ENCODE measurements at regions of chr11 and their contacts with region 1.

Region 1: GRCh38 chr11:61446211-61446651 is 16.3 kb downstream of the SDHAF2 start:
- DNase-seq: peak; percentile 83 to 95
- H3K4me3 ChIP-seq: no peak overlapping the region
- CTCF ChIP-seq: no peak
- POLR2A ChIP-seq: no peak

Region 2: GRCh38 chr11:60018058-60018457 is 1428.2 kb before region 1 on chr11:
- intact Hi-C with region 1: no loop called
- DNase-seq: no peak
- H3K4me3 ChIP-seq: no peak overlapping the region
- CTCF ChIP-seq: no peak
- POLR2A ChIP-seq: no peak

Region 3: GRCh38 chr11:61472868-61473267 is 26.6 kb after region 1 on chr11:
- intact Hi-C with region 1: no loop called
- DNase-seq: peak in 1 of 2 donors; percentile 31
- H3K4me3 ChIP-seq: no peak overlapping the region
- CTCF ChIP-seq: no peak
- POLR2A ChIP-seq: no peak

Region 4: GRCh38 chr11:61509043-61510029 is 63.1 kb after region 1 on chr11:
- intact Hi-C with region 1: loop called (anchors 10 kb)
- DNase-seq: no peak
- H3K4me3 ChIP-seq: no peak overlapping the region
- CTCF ChIP-seq: no peak
- POLR2A ChIP-seq: no peak

Region 5: DNA sequence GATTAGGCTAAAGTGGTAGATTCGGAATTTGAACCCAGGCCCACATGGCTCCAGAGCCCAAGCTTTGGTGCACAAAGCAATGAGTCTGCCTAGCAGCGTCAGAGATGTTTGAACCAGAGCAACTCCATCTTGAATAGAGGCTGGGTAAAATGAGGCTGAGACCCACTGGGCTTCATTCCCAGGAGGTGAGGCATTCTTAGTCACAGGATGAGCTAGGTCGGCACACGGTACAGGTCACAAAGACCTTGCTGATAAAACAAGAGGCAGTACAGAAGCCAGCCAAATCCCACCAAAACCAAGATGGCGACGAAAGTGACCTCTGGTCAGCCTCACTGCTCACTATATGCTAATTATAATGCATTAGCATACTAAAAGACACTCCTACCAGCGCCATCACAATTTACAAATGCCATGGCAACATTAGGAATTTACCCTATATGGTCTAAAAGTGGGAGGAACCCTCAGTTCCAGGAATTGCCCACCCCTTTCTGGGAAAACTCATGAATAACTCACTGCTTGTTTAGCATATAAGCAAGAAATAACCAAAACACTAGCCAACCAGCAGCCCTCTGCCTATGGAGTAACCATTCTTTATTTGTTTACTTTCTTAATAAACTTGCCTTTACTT is 193.7 kb after region 1 on chr11:
- intact Hi-C with region 1: loop called (anchors 10 kb)
- DNase-seq: no peak
- H3K4me3 ChIP-seq: no peak overlapping the region
- CTCF ChIP-seq: no peak
- POLR2A ChIP-seq: no peak